MCF 10A (cell line): ENCODE measurements at regions of chr7 and their contacts with region 1.

Region 1: DNA sequence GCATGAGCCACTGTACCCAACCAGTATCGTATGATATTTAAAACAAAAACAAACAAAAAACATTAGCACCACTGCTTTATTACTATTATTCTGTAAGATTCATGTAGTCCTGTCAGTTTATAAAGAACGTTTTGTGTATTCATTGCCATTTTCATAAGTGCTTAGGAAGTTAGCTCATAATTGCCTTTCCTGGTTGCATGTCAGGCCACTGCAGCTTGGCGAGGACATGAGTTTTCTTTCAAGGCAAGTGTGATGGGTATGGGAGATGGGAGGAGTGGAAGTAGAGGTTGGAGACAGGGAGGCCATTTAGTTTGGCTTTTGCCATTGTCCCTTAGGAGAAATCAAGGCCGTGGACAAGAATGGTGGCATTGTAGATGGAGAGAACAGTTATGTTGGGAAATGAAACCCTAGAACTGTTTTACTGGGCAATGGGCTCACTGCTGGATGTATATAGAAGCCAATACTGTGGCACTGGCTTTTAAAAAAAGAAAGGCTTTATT is 48.9 kb downstream of the TYW1 start:
- DNase-seq: no peak
- H3K4me3 Mint-ChIP-seq: no peak overlapping the region
- H3K27ac Mint-ChIP-seq: no peak overlapping the region
- H3K4me1 Mint-ChIP-seq: peaks cover 20% of the 10 kb centered on the region
- H3K27me3 Mint-ChIP-seq: no peaks in the 10 kb centered on the region
- CTCF ChIP-seq: no peak

Region 2: GRCh38 chr7:67019562-67020390 is 25.8 kb before region 1 on chr7:
- CTCF ChIA-PET with region 1: interaction called, 12 read pairs
- POLR2A ChIA-PET with region 1: no interaction called
- intact Hi-C with region 1: no loop called
- DNase-seq: no peak
- H3K4me3 Mint-ChIP-seq: no peak overlapping the region
- H3K27ac Mint-ChIP-seq: no peak overlapping the region
- H3K4me1 Mint-ChIP-seq: peaks cover under 1% of the 10 kb centered on the region
- H3K27me3 Mint-ChIP-seq: no peaks in the 10 kb centered on the region
- CTCF ChIP-seq: no peak

Region 3: GRCh38 chr7:67302113-67303039 is 256.8 kb after region 1 on chr7:
- CTCF ChIA-PET with region 1: interaction called, 19 read pairs
- POLR2A ChIA-PET with region 1: interaction called, 5 read pairs
- intact Hi-C with region 1: loop called (anchors 5 kb)
- DNase-seq: peak; percentile 100
- H3K4me3 Mint-ChIP-seq: peak overlapping the region; percentile 88
- H3K27ac Mint-ChIP-seq: peak overlapping the region; percentile 92
- H3K4me1 Mint-ChIP-seq: peaks cover 9% of the 10 kb centered on the region
- H3K27me3 Mint-ChIP-seq: no peaks in the 10 kb centered on the region
- CTCF ChIP-seq: no peak

Region 4: DNA sequence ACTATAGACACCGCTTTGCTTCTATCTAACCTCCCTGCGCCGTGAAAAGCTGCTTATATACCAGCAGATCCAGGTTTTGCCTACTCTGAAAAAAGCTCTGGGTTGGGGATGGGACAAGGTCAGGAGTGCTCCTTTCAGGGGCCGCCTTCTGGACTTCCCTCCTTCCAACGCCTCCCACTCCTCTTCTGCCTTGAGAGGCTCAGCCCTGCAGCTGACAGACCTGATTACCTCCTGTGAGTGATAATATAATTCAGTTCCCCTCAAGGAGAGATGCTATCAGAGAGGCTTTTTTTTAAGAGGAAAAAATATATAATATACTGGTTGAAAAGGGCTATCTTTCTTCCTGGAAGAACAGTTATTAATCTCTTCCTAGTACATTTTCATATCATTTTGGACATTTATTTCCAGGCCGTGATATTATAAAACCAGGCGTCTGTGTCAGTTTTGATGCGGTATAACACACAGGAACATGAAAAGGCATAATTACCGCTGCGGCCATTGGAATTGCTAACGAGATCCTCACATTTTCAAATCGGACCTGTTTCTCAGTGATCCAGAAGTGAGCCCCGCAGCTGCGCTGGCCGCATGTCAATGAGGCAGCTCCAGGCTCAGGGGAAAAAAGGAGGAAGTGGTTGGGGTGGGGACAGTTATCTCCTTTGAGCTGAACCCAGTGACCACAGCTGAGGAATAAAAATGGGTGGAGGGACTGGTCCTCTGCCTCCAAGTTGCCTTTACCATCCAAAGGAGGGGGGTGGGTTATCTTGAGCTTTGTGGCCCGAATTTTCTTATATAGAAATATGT is 408.2 kb after region 1 on chr7:
- CTCF ChIA-PET with region 1: no interaction called
- POLR2A ChIA-PET with region 1: no interaction called
- intact Hi-C with region 1: no loop called
- DNase-seq: no peak
- H3K4me3 Mint-ChIP-seq: no peak overlapping the region
- H3K27ac Mint-ChIP-seq: no peak overlapping the region
- H3K4me1 Mint-ChIP-seq: no peaks in the 10 kb centered on the region
- H3K27me3 Mint-ChIP-seq: no peaks in the 10 kb centered on the region
- CTCF ChIP-seq: no peak

Region 5: DNA sequence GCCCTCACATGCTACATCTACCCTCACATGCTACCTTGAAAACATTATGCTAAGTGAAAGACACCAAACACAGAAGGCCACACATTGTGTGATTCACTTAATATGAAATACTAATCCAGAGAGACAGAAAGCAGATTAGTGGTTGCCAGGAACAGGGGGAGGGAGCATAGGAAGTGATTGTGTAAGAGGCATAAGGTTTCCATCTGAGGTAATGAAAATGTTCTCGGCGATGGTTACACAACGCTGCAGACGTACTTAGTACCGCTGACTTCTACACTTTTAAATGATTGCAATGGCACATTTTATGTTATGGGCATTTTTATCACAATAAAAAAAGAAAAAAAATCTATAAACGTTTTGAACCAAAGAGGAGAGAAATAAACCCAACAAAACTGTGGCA is 693.4 kb after region 1 on chr7:
- CTCF ChIA-PET with region 1: no interaction called
- POLR2A ChIA-PET with region 1: no interaction called
- intact Hi-C with region 1: no loop called
- DNase-seq: no peak
- H3K4me3 Mint-ChIP-seq: no peak overlapping the region
- H3K27ac Mint-ChIP-seq: no peak overlapping the region
- H3K4me1 Mint-ChIP-seq: no peaks in the 10 kb centered on the region
- H3K27me3 Mint-ChIP-seq: no peaks in the 10 kb centered on the region
- CTCF ChIP-seq: no peak